ENCODE measurements at regions of chr15 and their contacts with region 1.

Region 1: GRCh38 chr15:48810414-48811317 is at the start of gene CEP152:
- DNase-seq: peak; percentile 95 to 97 (median 97)
- H3K4me3 ChIP-seq: peak within 1 kb of the TSS; percentile 80 to 93 (median 93)
- H3K4me3 Mint-ChIP-seq: peak within 1 kb of the TSS; percentile 93 to 95
- H3K27ac ChIP-seq: peak within 1 kb of the TSS; percentile 62 to 85
- H3K27ac Mint-ChIP-seq: peak within 1 kb of the TSS; percentile 84 to 93 (median 89)
- H3K4me1 ChIP-seq: peaks cover 14 to 22% of the 10 kb centered on the region in 2 donors
- H3K4me1 Mint-ChIP-seq: peaks cover 25% of the 10 kb centered on the region
- H3K27me3 ChIP-seq: no peaks in the 10 kb centered on the region
- H3K27me3 Mint-ChIP-seq: peaks cover 0 to 2% (median 0%) of the 10 kb centered on the region in 3 donors
- CTCF ChIP-seq: no peak
- polyA plus RNA-seq, gene CEP152: 1.0 to 3.8 (median 1.4) TPM

Region 2: GRCh38 chr15:48330855-48331795 is 479.5 kb before region 1 on chr15 and contains the start of gene DUT:
- intact Hi-C with region 1: loop called in 1 of 2 experiments (anchors 10 kb)
- DNase-seq: peak; percentile 53 to 74 (median 64)
- H3K4me3 ChIP-seq: peak within 1 kb of the TSS; percentile 76 to 90 (median 77)
- H3K4me3 Mint-ChIP-seq: peak within 1 kb of the TSS; percentile 99 to 100
- H3K27ac ChIP-seq: peak within 1 kb of the TSS; percentile 74 to 93
- H3K27ac Mint-ChIP-seq: peak within 1 kb of the TSS; percentile 90 to 99 (median 96)
- H3K4me1 ChIP-seq: peaks cover 12 to 20% of the 10 kb centered on the region in 2 donors
- H3K4me1 Mint-ChIP-seq: peaks cover 41% of the 10 kb centered on the region
- H3K27me3 ChIP-seq: no peaks in the 10 kb centered on the region
- H3K27me3 Mint-ChIP-seq: no peaks in the 10 kb centered on the region
- CTCF ChIP-seq: no peak
- polyA plus RNA-seq, gene DUT: 43.8 to 71.9 (median 62.3) TPM

Region 3: GRCh38 chr15:48877630-48878595 is 67.2 kb after region 1 on chr15 and contains the start of gene EID1:
- intact Hi-C with region 1: loop called in 1 of 2 experiments (anchors 5 kb)
- DNase-seq: peak; percentile 93 to 95 (median 94)
- H3K4me3 ChIP-seq: peak within 1 kb of the TSS; percentile 68 to 90 (median 79)
- H3K4me3 Mint-ChIP-seq: peak within 1 kb of the TSS; percentile 100
- H3K27ac ChIP-seq: peak within 1 kb of the TSS; percentile 79 to 90
- H3K27ac Mint-ChIP-seq: peak within 1 kb of the TSS; percentile 94 to 98 (median 97)
- H3K4me1 ChIP-seq: peaks cover 11 to 19% of the 10 kb centered on the region in 2 donors
- H3K4me1 Mint-ChIP-seq: peaks cover 23% of the 10 kb centered on the region
- H3K27me3 ChIP-seq: no peaks in the 10 kb centered on the region
- H3K27me3 Mint-ChIP-seq: peaks cover 0 to 3% (median 2%) of the 10 kb centered on the region in 3 donors
- CTCF ChIP-seq: no peak
- polyA plus RNA-seq, gene EID1: 41.2 to 182 (median 181) TPM

Region 4: GRCh38 chr15:49155110-49155833 is 344.6 kb after region 1 on chr15 and contains the start of gene COPS2:
- intact Hi-C with region 1: loop called in 1 of 2 experiments (anchors 5 kb)
- DNase-seq: peak; percentile 95 to 98 (median 96)
- H3K4me3 ChIP-seq: peak within 1 kb of the TSS; percentile 92 to 97 (median 95)
- H3K4me3 Mint-ChIP-seq: peak within 1 kb of the TSS; percentile 96 to 97
- H3K27ac ChIP-seq: peak within 1 kb of the TSS; percentile 86 to 89
- H3K27ac Mint-ChIP-seq: peak within 1 kb of the TSS; percentile 92 to 99 (median 98)
- H3K4me1 ChIP-seq: peaks cover 14 to 33% of the 10 kb centered on the region in 2 donors
- H3K4me1 Mint-ChIP-seq: peaks cover 38% of the 10 kb centered on the region
- H3K27me3 ChIP-seq: no peaks in the 10 kb centered on the region
- H3K27me3 Mint-ChIP-seq: no peaks in the 10 kb centered on the region
- CTCF ChIP-seq: no peak
- polyA plus RNA-seq, gene COPS2: 22.2 to 36.1 (median 32.4) TPM

Region 5: GRCh38 chr15:49706805-49707204 is 896.1 kb after region 1 on chr15:
- intact Hi-C with region 1: loop called in 1 of 2 experiments (anchors 10 kb)
- DNase-seq: peak; percentile 70 to 82 (median 71)
- H3K4me3 ChIP-seq: peak overlapping the region in 1 of 3 experiments; percentile 59
- H3K4me3 Mint-ChIP-seq: peak overlapping the region in 1 of 2 donors; percentile 65
- H3K27ac ChIP-seq: peak overlapping the region in 1 of 2 donors; percentile 59
- H3K27ac Mint-ChIP-seq: peak overlapping the region; percentile 43 to 91 (median 86)
- H3K4me1 ChIP-seq: peaks cover 24 to 42% of the 10 kb centered on the region in 2 donors
- H3K4me1 Mint-ChIP-seq: peaks cover 42% of the 10 kb centered on the region
- H3K27me3 ChIP-seq: no peaks in the 10 kb centered on the region
- H3K27me3 Mint-ChIP-seq: no peaks in the 10 kb centered on the region
- CTCF ChIP-seq: no peak